CD4-positive, alpha-beta memory T cell (primary cell): ENCODE measurements at regions of chrX and their contacts with region 1.

Region 1: DNA sequence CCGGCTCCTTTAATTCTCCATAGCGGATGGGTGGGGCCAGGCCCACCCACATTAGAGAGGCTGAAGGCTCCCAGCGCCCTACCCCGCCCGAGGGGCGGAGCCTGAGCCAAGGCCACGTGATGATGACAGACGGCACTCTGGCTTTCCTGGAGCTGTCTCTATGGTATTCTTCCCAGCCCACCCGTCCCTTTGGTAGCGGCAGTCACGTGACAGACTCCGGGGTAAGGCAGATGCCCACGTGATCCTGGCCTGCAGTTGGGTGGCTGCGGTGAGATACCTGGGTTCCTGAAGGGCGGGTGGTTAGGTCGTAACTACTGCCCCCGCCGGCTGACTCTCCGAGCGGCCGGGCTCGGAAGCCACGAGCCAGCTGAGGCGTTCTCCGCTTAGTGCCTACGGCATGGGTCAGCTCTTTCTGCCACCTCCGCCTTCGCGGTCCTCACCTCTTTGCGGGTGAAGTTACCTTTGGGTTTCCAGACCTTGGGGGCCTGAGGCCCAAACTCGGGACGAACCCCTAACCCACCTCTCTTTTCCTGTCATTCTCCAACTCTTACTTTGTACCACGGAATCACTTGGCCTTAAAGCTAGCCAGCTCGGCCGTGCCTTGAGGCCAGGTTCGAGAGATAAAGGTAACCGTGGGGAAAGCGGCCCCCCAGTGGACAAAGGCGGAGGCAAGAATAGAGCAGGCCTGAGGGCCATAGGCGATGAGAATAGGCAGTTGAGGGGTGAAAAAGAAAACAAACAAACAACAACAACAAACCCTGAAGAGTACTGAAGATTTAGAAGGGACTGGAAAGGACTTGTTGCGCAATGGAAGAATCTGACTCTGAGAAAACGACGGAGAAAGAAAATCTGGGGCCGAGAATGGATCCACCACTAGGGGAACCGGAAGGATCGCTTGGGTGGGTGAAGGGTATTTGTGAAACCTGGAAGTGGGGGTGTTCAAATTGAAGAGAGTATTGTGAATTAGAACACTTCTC is at the start of gene RRAGB:
- DNase-seq: peak; percentile 86 to 95 (median 90)
- H3K4me3 ChIP-seq: peak within 1 kb of the TSS; percentile 61 to 76
- H3K4me3 Mint-ChIP-seq: peak within 1 kb of the TSS; percentile 72 to 92 (median 86)
- H3K27ac ChIP-seq: peak within 1 kb of the TSS; percentile 80
- H3K27ac Mint-ChIP-seq: peak within 1 kb of the TSS; percentile 65 to 98 (median 94)
- H3K4me1 ChIP-seq: peaks cover 32% of the 10 kb centered on the region
- H3K4me1 Mint-ChIP-seq: peaks cover 18 to 44% (median 20%) of the 10 kb centered on the region in 4 donors
- H3K27me3 ChIP-seq: no peaks in the 10 kb centered on the region
- H3K27me3 Mint-ChIP-seq: no peaks in the 10 kb centered on the region
- total RNA-seq, gene RRAGB: 9.8 to 13.1 TPM

Region 2: GRCh38 chrX:55135171-55135570 is 582.6 kb before region 1 on chrX:
- CTCF ChIA-PET with region 1: no interaction called
- POLR2A ChIA-PET with region 1: interaction called, 3 read pairs
- intact Hi-C with region 1: loop called (anchors 10 kb)
- DNase-seq: peak; percentile 8 to 42 (median 11)
- H3K4me3 ChIP-seq: no peak overlapping the region
- H3K4me3 Mint-ChIP-seq: no peak overlapping the region
- H3K27ac ChIP-seq: no peak overlapping the region
- H3K27ac Mint-ChIP-seq: no peak overlapping the region
- H3K4me1 ChIP-seq: no peaks in the 10 kb centered on the region
- H3K4me1 Mint-ChIP-seq: no peaks in the 10 kb centered on the region
- H3K27me3 ChIP-seq: no peaks in the 10 kb centered on the region
- H3K27me3 Mint-ChIP-seq: no peaks in the 10 kb centered on the region

Region 3: DNA sequence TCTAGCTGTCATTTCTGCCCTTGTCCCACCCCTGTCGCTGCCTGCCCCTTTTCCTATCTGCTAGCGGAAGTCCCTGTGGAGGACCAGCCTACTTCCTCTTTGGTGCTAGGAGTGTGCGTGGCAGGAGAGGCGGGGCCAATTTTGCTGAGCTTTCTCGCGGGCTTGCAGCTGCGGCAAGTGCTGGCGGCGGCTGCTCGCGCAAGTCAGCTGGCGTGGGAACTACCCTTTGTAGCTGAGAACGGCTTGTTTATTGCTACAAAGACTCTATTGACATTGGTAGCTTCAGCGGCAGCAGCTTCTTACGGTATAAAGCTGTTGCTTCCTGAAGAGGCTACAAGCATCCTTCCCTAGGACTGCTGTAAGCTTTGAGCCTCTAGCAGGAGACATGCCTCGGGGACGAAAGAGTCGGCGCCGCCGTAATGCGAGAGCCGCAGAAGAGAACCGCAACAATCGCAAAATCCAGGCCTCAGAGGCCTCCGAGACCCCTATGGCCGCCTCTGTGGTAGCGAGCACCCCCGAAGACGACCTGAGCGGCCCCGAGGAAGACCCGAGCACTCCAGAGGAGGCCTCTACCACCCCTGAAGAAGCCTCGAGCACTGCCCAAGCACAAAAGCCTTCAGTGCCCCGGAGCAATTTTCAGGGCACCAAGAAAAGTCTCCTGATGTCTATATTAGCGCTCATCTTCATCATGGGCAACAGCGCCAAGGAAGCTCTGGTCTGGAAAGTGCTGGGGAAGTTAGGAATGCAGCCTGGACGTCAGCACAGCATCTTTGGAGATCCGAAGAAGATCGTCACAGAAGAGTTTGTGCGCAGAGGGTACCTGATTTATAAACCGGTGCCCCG is 265.6 kb before region 1 on chrX and contains the start of gene MAGEH1:
- CTCF ChIA-PET with region 1: interaction called, 5 read pairs
- POLR2A ChIA-PET with region 1: interaction called, 18 read pairs
- intact Hi-C with region 1: no loop called
- DNase-seq: peak; percentile 73 to 89 (median 81)
- H3K4me3 ChIP-seq: peak within 1 kb of the TSS; percentile 61 to 70
- H3K4me3 Mint-ChIP-seq: peak within 1 kb of the TSS; percentile 87 to 97 (median 92)
- H3K27ac ChIP-seq: peak within 1 kb of the TSS; percentile 85
- H3K27ac Mint-ChIP-seq: peak within 1 kb of the TSS; percentile 89 to 97 (median 95)
- H3K4me1 ChIP-seq: peaks cover 7% of the 10 kb centered on the region
- H3K4me1 Mint-ChIP-seq: peaks cover 5 to 30% (median 16%) of the 10 kb centered on the region in 4 donors
- H3K27me3 ChIP-seq: no peaks in the 10 kb centered on the region
- H3K27me3 Mint-ChIP-seq: no peaks in the 10 kb centered on the region
- total RNA-seq, gene MAGEH1: 26.9 to 28.8 TPM

Region 4: DNA sequence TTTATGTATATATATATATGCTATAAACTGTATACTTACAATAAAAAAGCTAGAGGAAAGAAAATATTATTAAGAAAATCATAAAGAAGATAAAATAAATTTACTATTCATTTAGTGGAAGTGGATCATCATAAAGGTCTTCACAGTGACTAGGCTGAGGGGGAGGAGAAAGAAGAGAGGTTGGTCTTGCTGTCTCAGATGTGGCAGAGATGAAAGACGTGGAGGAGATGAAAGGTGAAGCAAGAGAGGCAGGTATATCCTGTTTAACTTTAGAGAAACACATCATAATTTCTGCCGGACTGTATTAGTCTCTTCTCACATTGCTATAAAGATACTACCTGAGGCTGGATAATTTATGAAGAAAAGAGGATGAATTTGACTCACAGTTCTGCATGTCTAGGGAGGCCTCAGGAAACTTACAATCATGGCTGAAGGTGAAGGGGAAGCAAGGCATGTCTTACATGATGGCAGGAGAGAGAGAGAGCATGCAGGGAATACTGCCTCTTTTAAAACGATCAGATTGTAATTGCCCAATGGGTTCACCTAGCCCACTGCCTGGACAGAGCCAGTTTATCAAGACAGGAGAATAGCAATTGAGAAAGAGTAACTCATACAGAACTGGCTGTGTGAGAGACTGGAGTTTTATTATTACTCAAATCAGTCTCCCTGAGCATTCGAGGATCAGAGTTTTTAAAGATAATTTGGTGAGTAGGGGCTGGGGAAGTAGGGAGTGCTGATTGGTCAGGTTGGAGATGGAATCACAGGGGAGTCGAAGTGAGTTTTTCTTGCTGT is 22.4 kb before region 1 on chrX:
- CTCF ChIA-PET with region 1: interaction called, 3 read pairs
- POLR2A ChIA-PET with region 1: interaction called, 3 read pairs
- intact Hi-C with region 1: loop called (anchors 2 kb)
- DNase-seq: peak; percentile 46 to 64 (median 51)
- H3K4me3 ChIP-seq: no peak overlapping the region
- H3K4me3 Mint-ChIP-seq: peak overlapping the region; percentile 37 to 81 (median 69)
- H3K27ac ChIP-seq: no peak overlapping the region
- H3K27ac Mint-ChIP-seq: peak overlapping the region; percentile 5 to 77 (median 50)
- H3K4me1 ChIP-seq: peaks cover 27% of the 10 kb centered on the region
- H3K4me1 Mint-ChIP-seq: peaks cover 21 to 36% (median 25%) of the 10 kb centered on the region in 4 donors
- H3K27me3 ChIP-seq: no peaks in the 10 kb centered on the region
- H3K27me3 Mint-ChIP-seq: no peaks in the 10 kb centered on the region

Region 5: GRCh38 chrX:56248492-56248891 is 530.7 kb after region 1 on chrX:
- CTCF ChIA-PET with region 1: interaction called, 3 read pairs
- POLR2A ChIA-PET with region 1: no interaction called
- intact Hi-C with region 1: loop called (anchors 2 kb)
- DNase-seq: peak; percentile 35 to 56 (median 49)
- H3K4me3 ChIP-seq: no peak overlapping the region
- H3K4me3 Mint-ChIP-seq: no peak overlapping the region
- H3K27ac ChIP-seq: no peak overlapping the region
- H3K27ac Mint-ChIP-seq: peak overlapping the region in 1 of 7 donors; percentile 29
- H3K4me1 ChIP-seq: no peaks in the 10 kb centered on the region
- H3K4me1 Mint-ChIP-seq: peaks cover 5 to 10% (median 6%) of the 10 kb centered on the region in 4 donors
- H3K27me3 ChIP-seq: no peaks in the 10 kb centered on the region
- H3K27me3 Mint-ChIP-seq: no peaks in the 10 kb centered on the region